Activated CD4-positive, alpha-beta T cell treated with anti-CD3 and anti-CD28 coated beads for 36 hours (primary cell): ENCODE measurements at regions of chr7 and their contacts with region 1.

Region 1: GRCh38 chr7:114865564-114865963 is 56.3 kb upstream of the MDFIC start:
- DNase-seq: peak; percentile 77
- ATAC-seq: peak; percentile 75
- H3K4me3 Mint-ChIP-seq: no peak overlapping the region
- H3K27ac Mint-ChIP-seq: no peak overlapping the region
- H3K4me1 Mint-ChIP-seq: peaks cover 6% of the 10 kb centered on the region
- H3K27me3 Mint-ChIP-seq: no peaks in the 10 kb centered on the region

Region 2: DNA sequence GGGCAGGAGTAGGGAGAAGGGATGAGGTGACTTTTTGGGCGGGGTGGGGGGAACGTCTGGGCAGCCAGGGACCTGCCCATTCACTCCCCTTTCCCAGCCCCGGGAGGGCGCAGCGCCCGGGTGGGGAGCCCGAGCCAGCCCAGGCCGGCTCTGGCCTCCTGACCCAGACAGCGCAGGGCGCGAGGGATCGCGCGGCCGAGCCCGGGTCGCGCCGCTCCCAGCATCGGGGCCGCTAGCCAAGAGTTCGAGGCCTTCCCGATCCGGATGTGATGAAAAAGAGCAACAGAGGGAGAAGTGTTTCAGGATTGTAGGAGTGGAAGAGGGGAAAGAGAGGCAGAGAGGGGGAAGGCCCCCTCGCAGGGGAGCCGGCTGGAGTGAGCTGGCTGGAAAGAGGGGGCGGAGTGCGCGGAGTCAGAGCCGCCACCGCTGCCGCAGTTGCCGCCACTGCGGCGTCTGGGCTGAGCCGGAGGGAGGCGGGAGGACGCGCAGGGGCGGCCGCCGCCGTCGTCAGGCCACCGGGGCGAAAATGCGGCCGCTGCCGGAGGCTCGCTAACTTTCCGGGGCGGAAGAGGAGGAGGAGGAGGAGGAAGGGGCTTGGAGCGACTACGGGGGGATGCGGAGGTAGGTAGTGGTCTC is 56.6 kb after region 1 on chr7 and contains the start of gene MDFIC:
- CTCF ChIA-PET with region 1: interaction called, 6 read pairs
- POLR2A ChIA-PET with region 1: no interaction called
- intact Hi-C with region 1: loop called in 1 of 2 experiments (anchors 5 kb)
- DNase-seq: peak; percentile 83
- ATAC-seq: peak; percentile 62
- H3K4me3 Mint-ChIP-seq: peak within 1 kb of the TSS; percentile 89
- H3K27ac Mint-ChIP-seq: peak within 1 kb of the TSS; percentile 96
- H3K4me1 Mint-ChIP-seq: peaks cover 63% of the 10 kb centered on the region
- H3K27me3 Mint-ChIP-seq: no peaks in the 10 kb centered on the region
- total RNA-seq, gene MDFIC: 68.4 to 113 TPM

Region 3: GRCh38 chr7:115217373-115217772 is 351.8 kb after region 1 on chr7:
- CTCF ChIA-PET with region 1: interaction called, 15 read pairs
- POLR2A ChIA-PET with region 1: no interaction called
- intact Hi-C with region 1: loop called (anchors 2 kb)
- DNase-seq: no peak
- ATAC-seq: no peak
- H3K4me3 Mint-ChIP-seq: no peak overlapping the region
- H3K27ac Mint-ChIP-seq: no peak overlapping the region
- H3K4me1 Mint-ChIP-seq: peaks cover 3% of the 10 kb centered on the region
- H3K27me3 Mint-ChIP-seq: no peaks in the 10 kb centered on the region

Region 4: DNA sequence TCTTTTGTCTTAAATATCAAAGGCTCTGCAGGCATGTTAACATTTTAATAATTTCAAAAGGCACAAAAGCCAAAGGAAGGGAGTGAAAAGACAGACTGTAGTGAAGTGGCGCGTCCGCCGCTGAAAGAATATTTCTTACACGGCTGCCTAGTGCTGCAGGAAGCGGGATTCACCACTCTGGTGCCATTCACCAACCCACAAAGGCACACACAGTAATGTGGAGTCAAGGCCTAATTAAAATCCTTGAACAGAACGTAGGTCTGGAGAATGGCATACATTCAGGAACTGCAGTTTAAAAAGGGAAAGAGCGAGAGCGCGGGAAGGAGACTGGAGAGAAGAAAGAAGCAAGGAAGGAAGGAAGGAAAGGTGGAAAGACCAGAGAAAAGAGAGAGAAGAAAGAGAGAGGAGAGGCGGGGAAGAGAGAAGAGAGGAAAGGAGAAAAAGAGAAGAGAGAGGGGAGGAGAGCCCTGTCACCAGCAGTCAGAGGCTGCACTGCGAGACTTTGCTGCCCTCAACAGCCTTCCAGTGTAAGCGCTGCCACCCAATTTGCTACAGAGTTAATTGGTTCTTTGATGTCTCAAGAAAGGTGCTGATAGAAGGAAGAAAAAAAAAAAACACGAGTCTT is 610.3 kb after region 1 on chr7:
- CTCF ChIA-PET with region 1: interaction called, 3 read pairs
- POLR2A ChIA-PET with region 1: no interaction called
- intact Hi-C with region 1: loop called (anchors 5 to 10 kb)
- DNase-seq: peak; percentile 31
- ATAC-seq: no peak
- H3K4me3 Mint-ChIP-seq: no peak overlapping the region
- H3K27ac Mint-ChIP-seq: no peak overlapping the region
- H3K4me1 Mint-ChIP-seq: peaks cover 7% of the 10 kb centered on the region
- H3K27me3 Mint-ChIP-seq: peaks cover 19% of the 10 kb centered on the region

Region 5: GRCh38 chr7:115679976-115680375 is 814.4 kb after region 1 on chr7:
- CTCF ChIA-PET with region 1: no interaction called
- POLR2A ChIA-PET with region 1: no interaction called
- intact Hi-C with region 1: loop called in 1 of 2 experiments (anchors 5 kb)
- DNase-seq: no peak
- ATAC-seq: no peak
- H3K4me3 Mint-ChIP-seq: no peak overlapping the region
- H3K27ac Mint-ChIP-seq: no peak overlapping the region
- H3K4me1 Mint-ChIP-seq: no peaks in the 10 kb centered on the region
- H3K27me3 Mint-ChIP-seq: no peaks in the 10 kb centered on the region

Region 6: DNA sequence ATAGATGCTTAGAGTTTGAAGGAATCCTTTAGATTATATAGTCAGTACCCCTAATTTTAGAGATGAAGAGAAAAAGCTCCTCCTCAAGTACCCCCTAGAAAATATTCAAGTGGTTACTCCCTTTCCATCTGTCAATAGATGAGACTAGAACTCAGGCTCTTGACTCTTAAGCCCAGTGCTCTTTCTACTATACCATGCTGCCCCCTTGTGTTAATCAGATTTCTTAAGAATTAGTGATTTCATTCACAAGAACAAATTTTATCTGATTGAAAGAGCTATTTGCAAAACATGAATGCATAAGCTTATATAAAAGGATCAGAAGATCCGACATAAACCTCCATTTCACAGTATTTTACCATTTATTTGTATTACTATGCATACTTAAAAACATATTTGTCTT is 985.7 kb after region 1 on chr7:
- CTCF ChIA-PET with region 1: no interaction called
- POLR2A ChIA-PET with region 1: no interaction called
- intact Hi-C with region 1: loop called in 1 of 2 experiments (anchors 2 kb)
- DNase-seq: no peak
- ATAC-seq: no peak
- H3K4me3 Mint-ChIP-seq: no peak overlapping the region
- H3K27ac Mint-ChIP-seq: no peak overlapping the region
- H3K4me1 Mint-ChIP-seq: no peaks in the 10 kb centered on the region
- H3K27me3 Mint-ChIP-seq: peaks cover 2% of the 10 kb centered on the region

Region 7: GRCh38 chr7:115910541-115911164 is 1045.1 kb after region 1 on chr7:
- CTCF ChIA-PET with region 1: no interaction called
- POLR2A ChIA-PET with region 1: no interaction called
- intact Hi-C with region 1: loop called in 1 of 2 experiments (anchors 1 kb)
- DNase-seq: no peak
- ATAC-seq: no peak
- H3K4me3 Mint-ChIP-seq: no peak overlapping the region
- H3K27ac Mint-ChIP-seq: no peak overlapping the region
- H3K4me1 Mint-ChIP-seq: no peaks in the 10 kb centered on the region
- H3K27me3 Mint-ChIP-seq: peaks cover 5% of the 10 kb centered on the region